ENCODE measurements at regions of chr1 and their contacts with region 1.

Region 1: GRCh38 chr1:167517535-167518330 is 596 bp downstream of the CD247 start:
- DNase-seq: peak; percentile 52 to 86 (median 70)
- ATAC-seq: peak; percentile 72 to 74
- H3K4me3 Mint-ChIP-seq: peak overlapping the region; percentile 93 to 100 (median 99)
- H3K27ac Mint-ChIP-seq: peak overlapping the region; percentile 97 to 100 (median 99)
- H3K4me1 Mint-ChIP-seq: peaks cover 13 to 53% (median 42%) of the 10 kb centered on the region in 4 donors
- H3K27me3 Mint-ChIP-seq: no peaks in the 10 kb centered on the region

Region 2: DNA sequence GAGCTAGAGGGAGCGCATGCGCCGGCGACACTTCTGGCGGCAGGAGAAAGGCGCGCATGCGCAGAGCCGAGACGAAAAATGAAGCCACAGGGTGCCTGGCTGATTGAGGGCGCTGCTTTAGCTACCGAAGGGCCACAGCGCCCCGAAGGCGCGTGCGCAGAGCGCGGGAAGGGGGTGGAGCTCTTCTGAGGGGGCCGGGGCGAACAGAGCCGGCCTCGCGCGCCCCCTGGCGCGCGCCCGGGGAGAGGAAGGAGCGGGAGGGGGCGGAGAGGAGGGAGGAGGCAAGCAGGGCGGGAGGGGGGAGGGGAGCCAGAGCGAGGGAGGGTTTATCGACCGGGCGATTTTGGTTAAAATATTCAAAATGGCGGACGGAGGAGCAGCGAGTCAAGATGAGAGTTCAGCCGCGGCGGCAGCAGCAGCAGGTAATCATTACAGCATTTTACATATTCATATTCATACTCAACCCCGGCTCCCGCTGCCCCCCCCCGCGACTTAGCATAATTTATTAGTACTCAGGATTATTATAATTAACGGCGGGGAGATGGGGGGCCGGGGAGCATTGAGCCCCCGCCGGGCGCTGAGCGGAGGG is 297.1 kb before region 1 on chr1 and contains the start of gene POU2F1:
- POLR2A ChIA-PET with region 1: interaction called, 30 read pairs
- DNase-seq: peak in 9 of 10 donors; percentile 97 to 100 (median 99)
- ATAC-seq: peak; percentile 72 to 82
- H3K4me3 Mint-ChIP-seq: peak within 1 kb of the TSS; percentile 92 to 98 (median 95)
- H3K27ac Mint-ChIP-seq: peak within 1 kb of the TSS; percentile 91 to 99 (median 98)
- H3K4me1 Mint-ChIP-seq: peaks cover 17 to 44% (median 35%) of the 10 kb centered on the region in 4 donors
- H3K27me3 Mint-ChIP-seq: peaks cover 0 to 3% (median 0%) of the 10 kb centered on the region in 5 donors
- polyA plus RNA-seq, gene POU2F1: 5.0 to 9.8 (median 8.1) TPM

Region 3: GRCh38 chr1:167442124-167442848 is 75.4 kb before region 1 on chr1:
- POLR2A ChIA-PET with region 1: interaction called, 109 read pairs
- DNase-seq: peak; percentile 74 to 89 (median 82)
- ATAC-seq: peak; percentile 70 to 88
- H3K4me3 Mint-ChIP-seq: peak overlapping the region in 7 of 10 donors; percentile 22 to 78 (median 64)
- H3K27ac Mint-ChIP-seq: peak overlapping the region; percentile 49 to 96 (median 90)
- H3K4me1 Mint-ChIP-seq: peaks cover 52 to 97% (median 90%) of the 10 kb centered on the region in 4 donors
- H3K27me3 Mint-ChIP-seq: no peaks in the 10 kb centered on the region

Region 4: DNA sequence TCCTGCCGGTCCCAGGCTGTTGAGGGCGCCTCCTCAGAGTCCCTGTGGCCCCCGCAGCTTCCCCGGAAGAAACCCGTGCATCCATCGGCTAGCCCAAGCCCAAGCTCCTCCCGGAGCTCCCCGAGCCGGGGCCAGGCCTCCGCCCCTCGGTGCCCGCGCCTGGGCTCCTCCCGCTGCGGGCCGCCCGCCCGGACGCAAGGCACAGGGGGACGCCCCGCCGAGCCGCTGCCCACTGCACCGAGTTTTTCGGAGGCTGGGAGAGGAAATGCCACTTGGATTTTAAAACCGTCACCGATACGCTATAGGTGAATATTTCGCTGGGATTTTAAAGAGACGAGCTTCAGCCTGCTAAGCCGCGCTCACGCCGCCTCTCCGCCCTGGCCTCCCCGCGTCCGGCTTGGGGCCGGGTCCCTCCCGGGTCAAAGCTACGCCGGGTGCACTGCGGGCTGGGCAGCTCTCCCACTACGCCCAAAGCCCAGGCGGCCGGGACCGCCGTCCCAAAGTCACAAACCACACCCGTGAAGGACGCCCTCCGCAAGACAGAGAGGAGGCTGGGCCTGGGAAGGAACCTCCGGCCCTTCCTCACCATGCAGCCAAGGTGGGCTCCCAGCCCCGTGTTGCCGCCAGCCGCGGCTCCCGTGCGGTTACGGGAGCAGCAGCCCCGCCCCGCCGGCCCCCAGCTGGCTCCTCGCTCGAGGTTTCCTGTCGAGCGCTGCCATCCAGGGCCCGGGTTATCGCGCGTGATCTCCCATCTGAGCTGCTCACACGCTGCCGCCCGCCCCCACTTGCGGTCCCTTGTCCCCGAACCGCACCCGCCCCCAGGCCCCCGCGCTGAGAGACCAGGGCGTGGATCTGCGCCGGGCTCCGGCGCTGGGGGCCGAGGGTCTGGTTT is 62.6 kb before region 1 on chr1:
- POLR2A ChIA-PET with region 1: interaction called, 124 read pairs
- DNase-seq: peak; percentile 72 to 89 (median 80)
- ATAC-seq: peak; percentile 70 to 77
- H3K4me3 Mint-ChIP-seq: peak overlapping the region; percentile 66 to 91 (median 84)
- H3K27ac Mint-ChIP-seq: peak overlapping the region; percentile 53 to 97 (median 94)
- H3K4me1 Mint-ChIP-seq: peaks cover 39 to 74% (median 70%) of the 10 kb centered on the region in 4 donors
- H3K27me3 Mint-ChIP-seq: no peaks in the 10 kb centered on the region

Region 5: GRCh38 chr1:167491586-167492461 is 25.9 kb before region 1 on chr1:
- POLR2A ChIA-PET with region 1: interaction called, 89 read pairs
- DNase-seq: peak in 2 of 10 donors; percentile 40 to 54
- ATAC-seq: peak; percentile 14 to 25
- H3K4me3 Mint-ChIP-seq: peak overlapping the region; percentile 58 to 89 (median 78)
- H3K27ac Mint-ChIP-seq: peak overlapping the region; percentile 88 to 97 (median 96)
- H3K4me1 Mint-ChIP-seq: peaks cover 50 to 97% (median 97%) of the 10 kb centered on the region in 4 donors
- H3K27me3 Mint-ChIP-seq: peaks cover 0 to 5% (median 0%) of the 10 kb centered on the region in 5 donors

Region 6: DNA sequence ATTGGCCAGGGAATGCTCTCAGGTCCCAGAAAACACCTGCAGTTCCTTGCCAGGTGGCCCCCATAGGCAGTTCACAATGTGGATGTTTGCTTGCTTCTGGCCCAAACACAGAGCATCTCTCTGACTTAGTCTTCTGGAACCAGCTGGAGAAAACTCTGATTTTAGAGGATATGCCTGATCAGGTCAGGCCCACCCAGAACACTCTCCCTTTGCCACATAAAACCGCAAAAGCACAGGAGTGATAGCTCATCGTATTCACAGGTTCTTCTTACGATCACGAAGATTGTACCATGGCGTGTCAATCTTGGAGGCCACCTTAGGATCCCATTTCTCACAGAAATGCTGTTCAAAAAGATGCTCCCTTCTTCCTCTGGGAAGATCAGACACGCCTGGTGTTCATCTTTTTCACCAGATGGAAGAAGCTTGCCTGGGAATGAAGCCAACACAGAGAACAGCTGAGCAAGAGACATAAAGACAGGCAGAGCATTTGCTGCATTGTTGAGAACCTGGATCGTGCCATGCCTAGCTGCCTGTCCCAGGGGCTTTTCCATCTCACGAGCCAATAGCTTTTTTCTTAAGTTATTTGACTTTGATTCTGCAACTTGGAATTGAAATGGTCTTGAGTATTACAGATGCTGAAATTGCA is 12.2 kb after region 1 on chr1:
- POLR2A ChIA-PET with region 1: interaction called, 19 read pairs
- DNase-seq: no peak
- ATAC-seq: no peak
- H3K4me3 Mint-ChIP-seq: no peak overlapping the region
- H3K27ac Mint-ChIP-seq: peak overlapping the region in 1 of 10 donors; percentile 83
- H3K4me1 Mint-ChIP-seq: peaks cover 0 to 7% (median 6%) of the 10 kb centered on the region in 4 donors
- H3K27me3 Mint-ChIP-seq: no peaks in the 10 kb centered on the region

Region 7: DNA sequence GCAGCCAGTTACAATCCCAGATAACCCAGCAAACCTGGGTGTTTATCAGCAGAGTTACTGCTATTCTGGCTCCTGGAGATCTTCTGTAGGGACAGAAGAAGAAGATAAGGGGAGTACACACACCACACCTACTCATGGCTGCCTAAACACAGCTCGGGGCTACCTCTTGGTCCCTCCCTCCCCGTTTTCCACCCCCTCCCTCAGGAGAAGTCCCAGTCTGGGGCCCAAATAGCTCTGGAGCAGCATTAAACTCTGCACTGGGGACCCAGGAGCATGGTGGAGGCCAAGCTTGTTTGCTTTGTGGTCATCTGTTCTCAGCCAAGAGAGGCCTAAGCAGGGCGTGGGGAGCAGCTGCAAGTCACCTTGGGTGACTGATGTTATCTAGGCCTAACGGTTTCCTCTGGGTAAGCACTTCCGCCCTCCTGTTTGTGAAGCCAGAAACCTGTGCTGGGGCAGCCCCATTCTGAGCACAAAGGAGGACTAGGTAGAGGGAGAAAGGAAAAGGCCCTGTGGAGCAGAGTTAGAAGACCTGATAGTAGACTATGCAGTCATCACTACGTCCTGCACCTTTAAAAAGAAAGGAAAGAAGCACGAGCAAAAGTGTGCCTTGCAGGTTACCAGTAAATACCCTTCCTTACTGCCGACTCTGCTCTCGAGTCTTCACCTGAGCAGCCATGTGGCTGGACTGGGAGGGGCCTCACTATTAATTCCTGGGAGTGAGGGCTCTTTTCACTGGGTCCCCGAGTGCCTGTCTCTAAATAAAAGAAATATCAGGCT is 110.3 kb after region 1 on chr1:
- POLR2A ChIA-PET with region 1: interaction called, 30 read pairs
- DNase-seq: peak; percentile 48 to 84 (median 68)
- ATAC-seq: peak; percentile 79 to 83
- H3K4me3 Mint-ChIP-seq: peak overlapping the region; percentile 66 to 96 (median 92)
- H3K27ac Mint-ChIP-seq: peak overlapping the region; percentile 56 to 100 (median 96)
- H3K4me1 Mint-ChIP-seq: peaks cover 34 to 82% (median 70%) of the 10 kb centered on the region in 4 donors
- H3K27me3 Mint-ChIP-seq: no peaks in the 10 kb centered on the region